AG04449 (cell line): ENCODE measurements at regions of chr21 and their contacts with region 1.

Region 1: DNA sequence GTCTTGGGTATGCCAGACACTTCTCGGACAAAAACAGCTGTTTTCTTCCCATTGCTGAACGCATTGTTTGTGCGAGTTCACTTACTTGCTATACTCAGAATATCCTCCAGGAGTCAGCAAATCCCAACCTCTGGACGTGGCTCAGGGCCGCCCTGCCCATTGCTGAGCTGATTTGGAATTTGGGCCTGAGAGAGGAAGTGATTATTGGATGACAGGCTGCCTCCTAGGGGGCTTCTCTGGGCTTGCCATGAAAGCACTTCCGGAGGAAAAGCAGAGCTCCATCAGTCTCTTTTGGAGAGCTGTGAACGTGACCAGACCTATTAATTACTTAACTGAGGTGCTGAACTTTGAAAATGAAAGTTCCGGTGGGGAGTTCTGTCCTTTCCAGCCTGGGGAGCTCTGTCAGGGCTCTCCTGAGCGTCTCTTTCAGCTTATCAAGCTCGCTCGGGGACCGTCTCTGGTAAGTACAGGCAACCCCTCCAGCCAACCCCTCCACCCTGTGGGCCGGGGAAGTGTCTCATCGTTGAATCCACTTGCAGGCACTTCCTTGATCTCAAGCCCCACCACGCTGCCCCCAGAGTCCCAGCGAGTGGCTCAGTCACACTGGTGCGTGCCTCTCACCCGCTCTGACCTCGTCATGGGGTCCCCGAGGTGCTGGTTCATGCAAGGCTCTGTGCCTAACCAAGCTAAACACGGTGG is 76.9 kb downstream of the CLIC6 start:
- DNase-seq: no peak
- H3K4me3 ChIP-seq: no peak overlapping the region; the same call in 1 of the 2 replicates
- CTCF ChIP-seq: peak; percentile 75

Region 2: DNA sequence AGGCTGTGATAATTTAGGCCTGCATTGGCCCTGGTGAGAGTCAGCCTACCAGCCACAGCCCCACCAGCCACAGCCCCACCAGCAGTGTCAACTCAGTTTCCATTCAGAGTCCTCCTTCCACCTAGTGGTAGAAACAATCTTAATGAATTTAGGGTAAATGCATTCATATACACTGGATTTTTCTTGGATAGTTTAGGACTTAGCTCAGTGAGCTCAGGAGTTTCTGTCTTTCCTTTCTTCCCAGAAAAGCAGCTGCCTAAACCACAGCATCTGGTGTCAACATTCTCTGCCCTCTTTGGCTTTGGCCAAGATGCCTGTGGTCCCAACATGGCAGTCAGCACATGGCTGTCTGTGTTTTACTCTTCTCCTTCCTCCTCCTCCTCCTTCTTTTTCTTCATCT is 17.1 kb after region 1 on chr21:
- CTCF ChIA-PET with region 1: interaction called, 85 read pairs
- POLR2A ChIA-PET with region 1: no interaction called
- DNase-seq: peak; percentile 49
- H3K4me3 ChIP-seq: no peak overlapping the region
- CTCF ChIP-seq: peak; percentile 27

Region 3: DNA sequence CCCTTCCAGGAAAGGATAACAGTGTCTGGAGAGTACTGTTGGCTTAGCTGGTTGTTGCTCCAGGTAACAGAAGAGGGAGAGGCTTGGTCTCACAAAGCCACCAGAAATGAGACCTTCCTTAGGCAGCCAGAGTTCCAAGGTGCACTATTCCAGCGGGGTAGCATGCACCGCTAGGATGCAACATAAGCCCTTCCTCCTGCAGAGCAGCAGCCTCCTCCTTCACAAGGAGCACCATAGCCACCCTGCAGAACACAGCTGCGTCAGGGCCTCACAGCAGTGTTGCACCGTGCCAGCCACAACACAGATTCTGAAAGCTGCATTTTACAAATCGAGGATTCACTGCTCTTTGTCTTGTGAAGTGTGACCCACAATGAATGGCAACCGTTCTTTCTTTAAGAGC is 65.1 kb after region 1 on chr21:
- CTCF ChIA-PET with region 1: interaction called, 10 read pairs
- POLR2A ChIA-PET with region 1: interaction called, 4 read pairs
- DNase-seq: no peak
- H3K4me3 ChIP-seq: no peak overlapping the region
- CTCF ChIP-seq: no peak

Region 4: DNA sequence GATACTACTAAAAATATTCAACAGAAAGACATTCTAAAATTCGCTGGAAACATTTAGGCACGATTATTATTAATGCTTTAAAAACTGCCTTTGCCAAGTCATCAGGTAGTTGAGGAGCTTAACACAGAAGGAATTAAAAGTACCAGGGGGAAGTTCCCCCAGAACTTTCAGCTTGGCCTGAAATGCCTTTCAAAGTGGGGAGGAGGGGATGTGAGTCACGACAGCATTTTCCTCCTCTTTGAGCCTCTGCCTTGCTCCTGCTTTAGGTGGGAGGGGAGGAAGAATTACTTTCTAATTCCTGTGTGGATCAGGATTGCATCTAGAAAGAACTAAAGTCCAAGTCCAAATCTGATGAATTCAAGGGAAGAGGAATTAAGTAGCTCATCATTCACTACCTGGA is 106.7 kb after region 1 on chr21:
- CTCF ChIA-PET with region 1: interaction called, 14 read pairs
- POLR2A ChIA-PET with region 1: no interaction called
- DNase-seq: no peak
- H3K4me3 ChIP-seq: no peak overlapping the region
- CTCF ChIP-seq: no peak

Region 5: DNA sequence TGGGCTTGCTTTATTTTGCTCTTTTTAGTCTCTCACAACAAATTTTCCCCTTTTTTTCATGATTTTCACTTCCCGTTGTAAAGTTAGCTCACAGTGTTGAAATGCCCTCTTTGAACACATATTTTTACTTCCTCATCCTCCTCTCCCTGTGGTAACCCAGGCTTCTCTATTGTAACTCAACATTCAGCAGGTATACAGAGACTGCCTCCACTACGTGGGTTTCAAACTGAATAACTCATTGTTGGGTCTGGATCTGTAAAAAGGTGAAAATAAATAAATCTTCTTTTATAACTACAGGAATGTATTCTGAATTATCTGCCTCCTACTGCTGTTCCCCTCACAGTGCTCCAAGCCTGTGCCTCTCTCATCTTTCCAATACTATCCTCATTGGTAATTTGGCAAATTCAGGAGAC is 137.0 kb after region 1 on chr21:
- CTCF ChIA-PET with region 1: interaction called, 22 read pairs
- POLR2A ChIA-PET with region 1: interaction called, 12 read pairs
- DNase-seq: no peak
- H3K4me3 ChIP-seq: peak overlapping the region; percentile 83
- CTCF ChIP-seq: no peak

Region 6: GRCh38 chr21:35840197-35840799 is 1094.6 kb after region 1 on chr21:
- CTCF ChIA-PET with region 1: interaction called, 12 read pairs
- POLR2A ChIA-PET with region 1: no interaction called
- DNase-seq: peak; percentile 65
- H3K4me3 ChIP-seq: no peak overlapping the region
- CTCF ChIP-seq: peak; percentile 71

Region 7: GRCh38 chr21:36028127-36029069 is 1282.7 kb after region 1 on chr21:
- CTCF ChIA-PET with region 1: interaction called, 10 read pairs
- POLR2A ChIA-PET with region 1: no interaction called
- DNase-seq: no peak
- H3K4me3 ChIP-seq: peak overlapping the region; percentile 12; the same call in 1 of the 2 replicates
- CTCF ChIP-seq: peak; percentile 91